H1 (cell line): ENCODE measurements at regions of chr20 and their contacts with region 1.

Region 1: DNA sequence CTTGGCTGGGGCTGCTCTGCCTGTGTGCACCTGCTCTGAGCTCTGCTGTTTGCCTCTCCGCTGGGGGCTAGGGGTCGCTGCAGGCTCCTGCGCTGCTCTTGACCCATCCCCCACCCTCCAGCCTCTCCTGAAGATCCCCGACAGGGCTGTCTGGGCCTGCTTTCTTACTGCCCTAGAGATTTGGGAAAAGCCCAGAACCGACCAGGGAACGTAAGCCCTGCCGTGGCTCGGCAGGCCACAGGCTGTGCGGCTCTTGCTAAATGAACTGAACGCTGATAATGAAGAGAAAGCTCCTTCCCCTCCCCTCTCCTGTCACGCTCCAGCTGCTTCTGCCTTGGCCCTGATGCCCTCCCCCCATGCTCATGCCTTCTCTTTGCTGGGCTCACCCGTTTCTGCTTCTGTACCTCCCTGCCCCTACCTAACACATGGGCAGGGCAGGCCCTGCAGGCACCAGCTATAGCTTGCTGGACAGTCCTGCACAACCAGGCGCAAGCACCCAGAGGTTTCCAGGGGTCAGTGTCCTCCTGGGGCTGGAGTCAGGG is 32.0 kb upstream of the PCMTD2 start:
- DNase-seq: peak; percentile 63 to 88
- H3K4me3 ChIP-seq: no peak overlapping the region; a peak in 1 of 8 replicates
- H3K27ac ChIP-seq: no peak overlapping the region
- H3K4me1 ChIP-seq: peaks cover 0 to 12% (median 10%) of the 10 kb centered on the region in 4 experiments; a peak in 6 of 7 replicates
- H3K27me3 ChIP-seq: no peaks in the 10 kb centered on the region
- CTCF ChIP-seq: peak; percentile 88 to 91 (median 90)
- EP300 ChIP-seq: peak in 1 of 2 experiments; percentile 66; a peak in 1 of 3 replicates
- POLR2A ChIP-seq: no peak
- RAD21 ChIP-seq: peak; percentile 67 to 78

Region 2: GRCh38 chr20:64192406-64192805 is 31.2 kb before region 1 on chr20:
- CTCF ChIA-PET with region 1: interaction called, 30 read pairs
- POLR2A ChIA-PET with region 1: interaction called, 4 read pairs
- DNase-seq: peak in 1 of 2 experiments; percentile 74
- H3K4me3 ChIP-seq: no peak overlapping the region
- H3K27ac ChIP-seq: no peak overlapping the region
- H3K4me1 ChIP-seq: peaks cover 9 to 32% (median 19%) of the 10 kb centered on the region in 4 experiments
- H3K27me3 ChIP-seq: no peaks in the 10 kb centered on the region; a peak in 1 of 7 replicates
- CTCF ChIP-seq: no peak
- EP300 ChIP-seq: no peak
- POLR2A ChIP-seq: no peak
- RAD21 ChIP-seq: no peak

Region 3: DNA sequence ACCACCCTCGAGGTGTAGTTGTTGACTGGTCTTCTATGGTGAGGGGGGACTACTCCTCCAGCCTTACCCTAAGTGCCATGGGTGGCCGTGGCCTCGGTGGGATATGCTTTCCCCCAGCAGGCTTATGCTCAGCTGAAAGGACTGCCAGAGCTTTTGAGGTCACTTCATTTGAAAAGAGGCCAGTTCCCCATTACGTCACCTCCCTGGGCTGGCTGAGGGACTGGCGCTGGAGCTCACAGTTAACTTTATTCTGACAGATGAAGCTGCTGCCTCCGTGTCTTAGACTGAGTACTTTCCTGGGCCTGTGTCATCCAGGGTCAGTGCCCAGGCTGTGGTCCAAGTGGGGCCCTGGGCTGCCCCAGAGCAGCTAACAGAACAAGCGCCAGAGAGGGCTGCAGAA is 10.8 kb before region 1 on chr20:
- CTCF ChIA-PET with region 1: interaction called, 33 read pairs
- POLR2A ChIA-PET with region 1: no interaction called
- DNase-seq: no peak
- H3K4me3 ChIP-seq: no peak overlapping the region
- H3K27ac ChIP-seq: no peak overlapping the region
- H3K4me1 ChIP-seq: no peaks in the 10 kb centered on the region; a peak in 2 of 7 replicates
- H3K27me3 ChIP-seq: no peaks in the 10 kb centered on the region
- CTCF ChIP-seq: no peak
- EP300 ChIP-seq: no peak
- POLR2A ChIP-seq: no peak
- RAD21 ChIP-seq: no peak

Region 4: DNA sequence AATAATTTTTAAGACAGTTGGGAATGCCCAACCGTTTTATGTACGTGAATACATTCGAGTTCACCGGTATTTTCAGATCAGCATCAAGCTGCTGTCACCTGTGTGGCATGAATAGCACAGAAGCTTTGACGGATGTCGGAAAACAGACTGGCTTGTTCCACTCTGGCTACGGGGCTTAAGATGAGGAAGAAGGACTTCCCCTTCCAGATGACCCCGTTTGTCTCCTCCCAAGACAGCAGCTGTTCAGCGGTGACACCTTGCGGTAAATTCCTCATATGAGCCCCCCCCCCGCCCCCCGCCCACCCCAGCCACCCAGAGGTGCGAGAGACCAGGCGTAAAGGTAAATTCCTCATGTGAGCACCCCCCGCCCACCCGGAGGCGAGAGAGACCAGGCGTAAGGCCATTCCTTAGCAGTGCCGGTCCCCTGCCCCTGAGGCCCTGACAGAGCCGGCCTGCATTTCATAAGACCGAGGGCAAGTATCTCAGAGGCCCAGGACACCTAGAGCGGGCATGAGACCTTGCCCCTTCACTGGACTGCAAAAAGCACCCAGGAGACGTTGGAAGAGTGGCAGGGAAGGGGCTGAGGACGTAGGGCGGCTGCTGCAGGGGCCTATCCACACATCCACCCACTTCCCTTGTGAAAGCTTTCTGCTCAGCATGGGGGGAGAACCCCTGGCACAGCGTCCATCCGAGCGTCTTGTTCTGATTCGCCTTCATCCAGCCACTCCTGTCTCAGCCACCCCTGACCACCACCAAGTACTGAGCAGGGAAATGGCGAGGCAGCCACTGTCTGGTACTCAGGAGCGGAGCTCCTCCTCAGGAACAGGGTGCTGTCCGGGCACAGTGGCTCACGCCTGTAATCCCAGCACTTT is 24.6 kb after region 1 on chr20:
- CTCF ChIA-PET with region 1: interaction called, 16 read pairs
- POLR2A ChIA-PET with region 1: no interaction called
- DNase-seq: no peak
- H3K4me3 ChIP-seq: no peak overlapping the region
- H3K27ac ChIP-seq: no peak overlapping the region
- H3K4me1 ChIP-seq: no peaks in the 10 kb centered on the region; a peak in 1 of 7 replicates
- H3K27me3 ChIP-seq: no peaks in the 10 kb centered on the region; a peak in 1 of 7 replicates
- CTCF ChIP-seq: no peak
- EP300 ChIP-seq: no peak
- POLR2A ChIP-seq: no peak
- RAD21 ChIP-seq: no peak

Region 5: DNA sequence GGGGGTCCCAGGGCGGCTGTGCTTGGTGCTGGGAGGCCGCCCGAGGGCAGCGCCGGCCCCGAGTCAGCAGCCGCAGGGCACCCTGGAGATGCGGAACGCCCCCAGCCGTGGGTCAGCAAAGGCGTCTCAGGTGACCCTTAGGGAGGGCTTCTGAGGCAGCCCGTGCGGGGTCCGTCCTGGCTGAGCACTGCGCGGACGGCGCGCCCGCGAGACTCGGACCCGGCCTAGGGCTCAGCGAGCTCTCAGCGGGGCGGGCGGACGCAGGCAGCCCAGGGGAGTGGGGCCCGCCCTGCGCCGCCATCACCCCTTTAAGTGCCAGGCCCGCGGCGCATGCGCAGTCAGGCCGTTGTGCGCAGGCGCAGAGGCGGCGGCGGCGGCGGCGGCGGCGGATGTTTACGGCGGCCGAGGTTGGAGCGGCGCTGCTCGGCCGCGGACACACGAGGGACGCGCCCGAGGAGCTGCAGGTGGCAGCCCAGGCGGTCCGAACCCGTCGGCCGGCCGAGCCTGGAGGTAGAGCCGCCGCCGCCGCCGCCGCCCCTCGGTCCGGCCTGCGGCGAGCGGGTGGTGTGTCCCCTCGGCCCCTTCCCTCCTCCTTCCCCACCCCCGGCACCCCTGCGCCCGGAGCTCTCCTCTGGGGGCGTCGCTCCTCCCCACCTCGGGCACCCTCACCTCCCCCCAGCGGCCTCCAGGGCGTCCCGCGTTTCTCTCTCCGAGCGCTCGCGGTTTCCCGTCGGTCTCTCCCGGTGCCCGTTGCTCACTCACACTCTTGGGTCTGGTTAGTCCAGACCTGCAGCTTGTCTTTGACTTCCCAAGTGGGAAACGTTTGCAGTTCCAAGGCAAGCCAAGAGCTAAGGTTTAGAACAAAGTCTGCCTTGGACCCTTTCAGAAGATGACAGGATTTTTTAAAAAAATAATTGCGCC is 32.0 kb after region 1 on chr20 and contains the start of gene PCMTD2:
- CTCF ChIA-PET with region 1: interaction called, 41 read pairs
- POLR2A ChIA-PET with region 1: interaction called, 11 read pairs
- DNase-seq: peak; percentile 46 to 90
- H3K4me3 ChIP-seq: peak within 1 kb of the TSS; percentile 72 to 98 (median 84)
- H3K27ac ChIP-seq: peak within 1 kb of the TSS; percentile 33; the same call in 1 of the 2 replicates
- H3K4me1 ChIP-seq: peaks cover 2 to 17% (median 8%) of the 10 kb centered on the region in 4 experiments; a peak in 6 of 7 replicates
- H3K27me3 ChIP-seq: no peaks in the 10 kb centered on the region
- CTCF ChIP-seq: no peak
- EP300 ChIP-seq: no peak
- POLR2A ChIP-seq: peak in 1 of 2 experiments; percentile 67; a peak in 2 of 3 replicates
- RAD21 ChIP-seq: no peak; a peak in 2 of 4 replicates
- total RNA-seq, gene PCMTD2: 55.1 and 57.8 TPM in 2 replicates